PC-9 (cell line): ENCODE measurements at regions of chr2 and their contacts with region 1.

Region 1: GRCh38 chr2:1625208-1625937 is 118.9 kb downstream of the PXDN start:
- DNase-seq: peak; percentile 85 to 97
- H3K4me3 ChIP-seq: peak overlapping the region; percentile 53
- H3K27ac ChIP-seq: peak overlapping the region; percentile 77
- H3K4me1 ChIP-seq: peaks cover 62% of the 10 kb centered on the region
- H3K27me3 ChIP-seq: no peaks in the 10 kb centered on the region; the same call in 1 of the 2 replicates
- CTCF ChIP-seq: no peak

Region 2: DNA sequence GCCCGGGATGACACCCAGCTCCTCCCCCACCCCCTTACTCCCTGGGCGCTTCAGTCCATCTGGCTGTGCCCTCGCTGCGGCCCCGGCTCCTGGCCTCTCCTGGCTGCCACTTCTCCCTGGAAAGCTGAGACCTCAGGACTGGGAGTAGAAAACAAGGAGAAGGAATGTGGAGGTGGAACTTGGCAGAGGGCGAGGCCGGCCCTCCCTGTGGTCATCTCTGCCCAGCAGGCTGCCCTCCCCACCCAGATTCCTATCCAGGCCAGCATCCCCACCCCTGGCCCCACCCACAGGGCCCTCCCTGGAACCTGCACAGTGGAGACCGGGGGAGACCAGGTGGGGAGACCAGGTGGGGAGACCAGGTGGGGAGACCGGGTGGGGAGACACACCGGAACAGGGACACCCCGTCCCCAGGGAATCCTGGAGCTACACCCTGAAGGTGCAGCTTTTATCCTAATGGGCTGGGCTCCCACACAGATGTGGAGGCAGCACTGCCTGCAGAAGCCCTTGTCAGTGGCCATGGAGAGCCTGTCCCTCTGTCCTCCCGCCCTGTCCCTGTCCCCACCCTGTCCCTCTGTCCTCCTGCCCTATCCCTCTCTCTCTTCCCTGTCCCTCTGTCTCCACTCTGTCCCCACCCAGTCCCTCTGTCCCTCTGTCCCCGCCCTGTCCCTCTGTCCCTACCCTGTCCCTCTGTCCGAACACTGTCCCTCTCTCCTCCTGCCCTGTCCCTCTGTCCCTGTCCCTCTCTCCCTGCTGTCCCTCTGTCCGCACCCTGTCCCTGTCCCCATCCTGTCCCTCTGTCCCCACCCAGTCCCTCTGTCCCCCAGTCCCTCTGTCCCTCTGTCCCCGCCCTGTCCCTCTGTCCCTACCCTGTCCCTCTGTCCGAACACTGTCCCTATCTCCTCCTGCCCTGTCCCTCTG is 38.2 kb before region 1 on chr2:
- CTCF ChIA-PET with region 1: interaction called, 6 read pairs
- POLR2A ChIA-PET with region 1: no interaction called
- intact Hi-C with region 1: loop called (anchors 2 kb)
- DNase-seq: peak; percentile 77 to 84
- H3K4me3 ChIP-seq: peak overlapping the region; percentile 54; the same call in 1 of the 2 replicates
- H3K27ac ChIP-seq: peak overlapping the region; percentile 78
- H3K4me1 ChIP-seq: peaks cover 23% of the 10 kb centered on the region
- H3K27me3 ChIP-seq: peaks cover 18% of the 10 kb centered on the region
- CTCF ChIP-seq: no peak

Region 3: GRCh38 chr2:1600191-1601082 is 24.9 kb before region 1 on chr2:
- CTCF ChIA-PET with region 1: interaction called, 3 read pairs
- POLR2A ChIA-PET with region 1: interaction called, 8 read pairs
- intact Hi-C with region 1: loop called (anchors 1 kb)
- DNase-seq: peak; percentile 81 to 84
- H3K4me3 ChIP-seq: no peak overlapping the region
- H3K27ac ChIP-seq: peak overlapping the region; percentile 50
- H3K4me1 ChIP-seq: peaks cover 30% of the 10 kb centered on the region
- H3K27me3 ChIP-seq: peaks cover 12% of the 10 kb centered on the region; the same call in 1 of the 2 replicates
- CTCF ChIP-seq: no peak

Region 4: DNA sequence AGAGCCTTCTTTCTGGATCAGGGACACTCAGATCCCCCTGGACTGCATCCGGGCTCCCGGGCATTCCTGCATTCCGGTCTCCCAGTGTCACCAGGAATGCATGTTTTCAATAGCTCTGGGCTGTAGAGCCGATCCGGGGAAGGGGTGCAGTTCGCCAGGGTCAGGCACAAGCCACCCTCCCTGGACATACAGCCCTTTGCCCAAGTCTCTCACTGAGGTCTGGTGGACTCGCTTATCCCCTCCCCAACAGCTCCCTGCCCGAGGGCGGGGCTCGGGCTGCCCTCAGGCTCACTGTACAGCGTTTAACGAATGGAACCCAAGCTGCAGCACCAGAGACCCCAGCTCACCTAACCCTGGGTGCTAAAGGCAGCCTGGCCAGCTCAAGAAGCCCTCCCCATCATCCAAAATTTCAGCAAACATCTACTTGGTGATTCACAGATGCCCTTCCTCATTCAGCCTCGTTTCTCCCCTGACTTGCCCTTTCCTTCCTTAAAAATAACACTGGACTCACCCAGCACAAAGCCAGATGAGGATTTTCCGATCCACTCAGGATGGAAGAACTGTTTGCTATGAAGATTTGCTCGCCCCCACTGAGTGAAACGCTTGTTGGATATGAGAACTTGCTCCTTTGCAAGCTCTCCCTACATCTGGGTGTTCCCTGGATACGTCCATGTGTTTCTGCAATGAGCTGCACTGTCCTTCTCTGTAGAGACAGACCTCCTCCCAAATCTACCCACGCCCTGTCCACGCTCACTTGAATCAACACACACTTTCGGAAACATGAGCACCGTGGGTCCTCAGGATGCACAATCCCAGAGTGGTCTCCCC is 60.8 kb after region 1 on chr2:
- CTCF ChIA-PET with region 1: no interaction called
- POLR2A ChIA-PET with region 1: no interaction called
- intact Hi-C with region 1: loop called (anchors 5 kb)
- DNase-seq: peak; percentile 67 to 74
- H3K4me3 ChIP-seq: no peak overlapping the region
- H3K27ac ChIP-seq: peak overlapping the region; percentile 70
- H3K4me1 ChIP-seq: peaks cover 50% of the 10 kb centered on the region
- H3K27me3 ChIP-seq: peaks cover 18% of the 10 kb centered on the region; the same call in 1 of the 2 replicates
- CTCF ChIP-seq: no peak